ENCODE measurements at regions of chr20 and their contacts with region 1.

Region 1: DNA sequence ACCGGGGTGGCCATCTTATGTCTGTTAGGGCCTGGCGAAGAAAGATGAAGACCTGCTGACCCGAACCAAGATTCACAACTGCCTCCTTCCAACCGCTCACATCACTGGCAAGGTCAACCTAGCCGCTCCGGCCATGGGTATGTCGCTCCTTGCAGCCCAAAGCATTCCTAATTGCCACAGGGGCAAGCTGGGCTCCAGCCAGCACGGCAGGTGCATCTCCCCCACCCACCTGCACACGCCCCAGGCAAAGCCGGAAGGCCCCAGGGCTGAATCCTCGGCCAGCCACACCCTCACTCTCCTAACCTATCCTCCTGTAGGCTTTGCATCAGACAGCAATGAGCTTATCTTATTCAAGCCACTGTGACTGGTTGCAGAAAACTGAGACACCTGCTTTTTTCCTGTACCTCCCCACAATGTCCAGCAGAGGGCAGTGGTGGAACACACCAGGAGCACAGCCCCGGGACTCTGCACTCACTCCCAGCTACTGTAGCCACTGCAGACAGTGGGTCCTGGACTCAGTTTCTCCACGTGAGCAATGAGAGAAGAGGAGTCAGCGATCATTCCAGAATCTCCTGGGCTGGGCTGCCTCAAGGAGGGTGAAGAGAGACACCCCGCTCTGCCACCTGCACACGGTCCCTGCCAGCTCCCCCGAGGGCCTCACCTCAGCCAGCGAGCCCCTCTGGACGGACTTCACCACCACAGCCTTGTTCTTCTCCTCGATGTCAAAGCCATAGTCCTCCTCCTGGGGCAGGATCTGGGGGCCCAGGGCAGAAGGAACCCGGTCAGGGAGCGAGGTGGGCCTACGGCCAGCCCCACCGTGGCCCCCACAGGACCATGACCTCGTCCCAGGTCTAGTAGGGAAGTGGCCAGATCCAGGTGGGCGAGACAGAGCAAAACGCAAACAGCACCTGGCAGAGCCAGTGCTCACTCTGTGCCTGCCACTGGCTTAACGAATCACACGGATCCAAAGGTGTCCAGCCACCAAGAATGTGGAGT is 170.0 kb downstream of the PREX1 start:
- DNase-seq: peak; percentile 26 to 83 (median 68)
- ATAC-seq: peak; percentile 93
- H3K4me3 ChIP-seq: no peak overlapping the region
- H3K4me3 Mint-ChIP-seq: no peak overlapping the region
- H3K27ac ChIP-seq: no peak overlapping the region
- H3K27ac Mint-ChIP-seq: peak overlapping the region; percentile 74
- H3K4me1 ChIP-seq: no peaks in the 10 kb centered on the region
- H3K4me1 Mint-ChIP-seq: peaks cover 23% of the 10 kb centered on the region
- H3K27me3 ChIP-seq: no peaks in the 10 kb centered on the region
- H3K27me3 Mint-ChIP-seq: no peaks in the 10 kb centered on the region
- CTCF ChIP-seq: peak; percentile 96

Region 2: DNA sequence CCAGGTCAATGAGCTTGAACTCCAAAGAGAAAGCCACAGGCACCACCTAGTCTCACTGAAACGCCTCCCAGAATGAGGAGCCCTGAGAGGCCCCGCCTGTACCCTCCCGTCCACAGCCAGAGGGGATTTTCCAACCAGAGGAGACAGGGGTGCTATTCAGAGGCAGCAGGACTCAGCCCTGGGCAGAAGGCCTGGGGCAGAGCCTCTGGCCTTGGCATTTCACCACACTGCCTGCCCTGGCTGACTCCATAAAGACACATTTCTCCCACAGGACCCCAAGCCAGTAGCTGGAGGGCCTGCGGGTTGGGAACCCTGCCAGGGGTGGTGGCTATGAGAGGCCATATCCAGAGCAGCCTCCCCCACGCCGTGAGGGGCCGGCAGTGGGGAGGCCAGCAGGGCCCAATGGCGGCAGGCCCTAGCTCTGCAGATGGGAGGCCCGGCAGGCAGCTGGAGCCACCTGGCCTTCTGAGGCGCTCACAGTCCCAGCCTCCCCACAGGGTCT is 10.7 kb after region 1 on chr20:
- CTCF ChIA-PET with region 1: interaction called, 13 read pairs
- POLR2A ChIA-PET with region 1: no interaction called
- intact Hi-C with region 1: no loop called
- DNase-seq: no peak
- ATAC-seq: no peak
- H3K4me3 ChIP-seq: no peak overlapping the region
- H3K4me3 Mint-ChIP-seq: no peak overlapping the region
- H3K27ac ChIP-seq: no peak overlapping the region
- H3K27ac Mint-ChIP-seq: no peak overlapping the region
- H3K4me1 ChIP-seq: no peaks in the 10 kb centered on the region
- H3K4me1 Mint-ChIP-seq: no peaks in the 10 kb centered on the region
- H3K27me3 ChIP-seq: no peaks in the 10 kb centered on the region
- H3K27me3 Mint-ChIP-seq: no peaks in the 10 kb centered on the region
- CTCF ChIP-seq: no peak

Region 3: DNA sequence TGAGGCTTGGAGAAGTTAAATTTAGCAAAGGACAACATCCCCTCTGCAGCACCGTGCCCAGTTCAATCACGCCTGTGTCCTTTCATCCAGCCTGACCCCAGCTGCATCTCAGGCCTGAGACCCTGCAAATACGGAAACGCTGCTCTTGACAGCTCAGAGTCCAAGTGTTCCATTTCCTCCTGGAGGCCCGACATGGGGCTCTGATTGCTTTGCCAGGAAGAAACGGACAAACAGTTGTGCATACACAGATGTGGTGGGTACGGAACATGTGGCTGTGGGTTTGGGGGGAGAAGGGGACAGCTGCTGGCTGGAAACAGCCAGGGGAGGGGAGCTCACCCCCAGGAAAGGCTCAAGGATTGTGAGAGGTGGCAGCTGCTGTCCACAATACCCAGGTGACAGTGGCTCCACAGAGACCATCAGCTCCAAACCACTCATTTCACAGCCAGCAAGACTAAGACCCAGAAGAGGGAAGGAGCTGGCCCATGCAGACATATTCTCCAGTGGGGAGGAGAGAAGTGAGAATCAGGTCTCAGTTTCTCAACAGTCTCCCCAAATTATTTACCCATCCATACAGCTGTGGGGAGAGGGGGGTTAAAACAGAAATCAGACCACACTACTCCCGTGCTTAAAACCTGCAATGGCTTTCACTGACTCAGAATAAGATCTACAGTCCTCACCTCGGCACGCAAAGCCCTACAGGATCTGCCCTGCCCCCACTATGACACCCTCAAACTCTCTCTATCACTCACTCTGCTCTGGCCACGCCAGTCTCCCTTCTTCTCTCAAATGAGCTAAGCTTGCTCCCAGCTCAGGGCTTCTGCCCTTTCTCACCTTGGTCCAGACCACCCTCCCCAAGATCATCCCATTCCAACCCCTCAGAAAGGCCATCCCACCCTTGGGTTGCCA is 80.9 kb after region 1 on chr20:
- CTCF ChIA-PET with region 1: no interaction called
- POLR2A ChIA-PET with region 1: no interaction called
- intact Hi-C with region 1: loop called in 1 of 2 experiments (anchors 10 kb)
- DNase-seq: peak in 6 of 9 experiments; percentile 39 to 72 (median 58)
- ATAC-seq: peak; percentile 78
- H3K4me3 ChIP-seq: no peak overlapping the region
- H3K4me3 Mint-ChIP-seq: peak overlapping the region; percentile 50
- H3K27ac ChIP-seq: peak overlapping the region in 1 of 2 experiments; percentile 55
- H3K27ac Mint-ChIP-seq: peak overlapping the region; percentile 89
- H3K4me1 ChIP-seq: peaks cover 61% of the 10 kb centered on the region
- H3K4me1 Mint-ChIP-seq: peaks cover 63% of the 10 kb centered on the region
- H3K27me3 ChIP-seq: no peaks in the 10 kb centered on the region
- H3K27me3 Mint-ChIP-seq: no peaks in the 10 kb centered on the region
- CTCF ChIP-seq: no peak

Region 4: DNA sequence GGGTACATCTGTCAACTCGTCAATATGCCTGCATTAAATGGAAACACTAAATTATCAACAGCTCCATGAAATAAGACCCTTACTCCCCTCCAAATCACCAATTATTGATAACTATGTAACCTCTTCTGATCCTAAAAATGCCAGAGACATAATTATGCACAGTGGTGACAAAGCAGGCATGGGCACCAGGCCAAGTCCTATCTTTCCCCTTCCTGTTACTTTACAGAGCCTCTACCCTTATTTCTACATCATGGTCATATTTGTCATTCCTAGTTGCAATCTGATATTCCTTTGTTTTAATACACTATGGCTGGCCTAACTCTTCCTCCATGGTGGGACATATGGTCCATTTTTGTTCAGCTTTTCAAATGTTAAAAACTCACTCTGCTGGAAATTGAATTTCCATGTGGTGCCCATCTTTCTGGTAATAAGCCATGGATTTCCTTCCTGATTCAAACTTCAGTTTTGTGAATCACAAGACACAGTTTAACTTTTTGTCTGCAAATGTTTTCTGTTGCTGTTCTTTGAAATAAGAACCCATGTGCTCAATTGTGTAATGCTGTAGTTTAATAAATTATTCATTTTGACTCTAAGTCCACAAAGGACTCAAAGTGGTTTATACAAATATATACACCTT is 222.0 kb after region 1 on chr20:
- CTCF ChIA-PET with region 1: interaction called, 18 read pairs
- POLR2A ChIA-PET with region 1: interaction called, 3 read pairs
- intact Hi-C with region 1: no loop called
- DNase-seq: no peak
- ATAC-seq: no peak
- H3K4me3 ChIP-seq: no peak overlapping the region
- H3K4me3 Mint-ChIP-seq: no peak overlapping the region
- H3K27ac ChIP-seq: no peak overlapping the region
- H3K27ac Mint-ChIP-seq: no peak overlapping the region
- H3K4me1 ChIP-seq: no peaks in the 10 kb centered on the region
- H3K4me1 Mint-ChIP-seq: no peaks in the 10 kb centered on the region
- H3K27me3 ChIP-seq: no peaks in the 10 kb centered on the region
- H3K27me3 Mint-ChIP-seq: no peaks in the 10 kb centered on the region
- CTCF ChIP-seq: no peak

Region 5: GRCh38 chr20:48904365-48905296 is 246.9 kb after region 1 on chr20:
- CTCF ChIA-PET with region 1: interaction called, 204 read pairs
- POLR2A ChIA-PET with region 1: interaction called, 3 read pairs
- intact Hi-C with region 1: loop called (anchors 1 kb)
- DNase-seq: peak; percentile 54 to 80 (median 74)
- ATAC-seq: peak; percentile 87
- H3K4me3 ChIP-seq: no peak overlapping the region
- H3K4me3 Mint-ChIP-seq: no peak overlapping the region
- H3K27ac ChIP-seq: no peak overlapping the region
- H3K27ac Mint-ChIP-seq: no peak overlapping the region
- H3K4me1 ChIP-seq: peaks cover 4% of the 10 kb centered on the region
- H3K4me1 Mint-ChIP-seq: peaks cover 6% of the 10 kb centered on the region
- H3K27me3 ChIP-seq: no peaks in the 10 kb centered on the region
- H3K27me3 Mint-ChIP-seq: no peaks in the 10 kb centered on the region
- CTCF ChIP-seq: peak; percentile 84

Measured in CD8-positive, alpha-beta T cell (primary cell).